ENCODE measurements at regions of chr7 and their contacts with region 1.

Region 1: GRCh38 chr7:5665094-5666025 is 116.1 kb downstream of the RNF216 start:
- DNase-seq: peak; percentile 90
- H3K4me3 ChIP-seq: no peak overlapping the region
- H3K27ac ChIP-seq: no peak overlapping the region
- H3K4me1 ChIP-seq: no peaks in the 10 kb centered on the region
- H3K27me3 ChIP-seq: no peaks in the 10 kb centered on the region
- CTCF ChIP-seq: peak; percentile 91

Region 2: GRCh38 chr7:4830176-4830575 is 835.2 kb before region 1 on chr7:
- CTCF ChIA-PET with region 1: no interaction called
- POLR2A ChIA-PET with region 1: interaction called, 30 read pairs
- intact Hi-C with region 1: no loop called
- DNase-seq: peak; percentile 86
- H3K4me3 ChIP-seq: no peak overlapping the region
- H3K27ac ChIP-seq: no peak overlapping the region
- H3K4me1 ChIP-seq: no peaks in the 10 kb centered on the region
- H3K27me3 ChIP-seq: no peaks in the 10 kb centered on the region
- CTCF ChIP-seq: peak; percentile 99

Measured in A673 (cell line).